A549 (cell line): ENCODE measurements at regions of chr17 and their contacts with region 1.

Region 1: DNA sequence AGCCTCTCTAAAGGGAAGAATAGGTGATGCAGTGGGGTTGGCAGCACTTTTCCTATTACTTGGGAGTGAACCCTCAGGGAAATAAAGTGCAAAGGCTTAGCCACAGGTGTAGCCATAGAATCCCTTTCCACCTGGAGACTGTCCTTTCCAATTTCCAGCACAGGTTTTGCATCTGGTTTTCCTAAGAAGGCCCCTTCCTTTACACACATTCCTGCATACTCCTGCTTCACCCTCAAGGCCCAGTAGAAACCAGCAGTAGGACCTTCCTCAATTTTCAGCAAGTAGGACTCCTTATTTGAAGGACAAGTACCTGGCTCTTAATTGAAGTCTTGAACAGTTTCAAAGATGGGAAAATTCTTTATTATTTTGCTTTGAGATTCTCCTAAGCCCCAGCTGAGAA is 171.8 kb upstream of the TBX2 start:
- DNase-seq: no peak
- ATAC-seq: no peak
- H3K4me3 ChIP-seq: no peak overlapping the region
- H3K27ac ChIP-seq: no peak overlapping the region
- H3K4me1 ChIP-seq: no peaks in the 10 kb centered on the region
- CTCF ChIP-seq: no peak
- EP300 ChIP-seq: no peak
- POLR2A ChIP-seq: no peak
- RAD21 ChIP-seq: no peak

Region 2: DNA sequence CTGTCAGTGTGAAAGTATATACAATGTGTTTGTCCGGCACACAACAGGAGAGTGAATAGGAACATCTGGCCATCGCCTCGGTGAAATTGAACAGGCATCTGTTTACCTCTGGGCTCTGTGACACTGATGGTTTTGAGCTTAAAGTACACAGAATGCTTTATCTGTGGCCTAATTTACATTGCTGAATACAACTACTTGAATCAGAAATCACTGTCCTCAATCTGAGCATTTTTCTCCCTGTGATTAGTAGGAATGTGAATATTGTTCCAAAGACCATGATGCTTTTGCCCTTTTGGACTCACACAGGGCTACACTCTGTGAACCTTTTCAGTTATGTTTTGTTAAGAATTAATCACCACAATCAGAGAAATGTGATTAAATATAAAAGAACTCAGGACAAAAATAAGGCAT is 151.2 kb before region 1 on chr17:
- CTCF ChIA-PET with region 1: no interaction called
- POLR2A ChIA-PET with region 1: no interaction called
- DNase-seq: no peak
- ATAC-seq: no peak
- H3K4me3 ChIP-seq: no peak overlapping the region
- H3K27ac ChIP-seq: no peak overlapping the region
- H3K4me1 ChIP-seq: peaks cover 5% of the 10 kb centered on the region; the same call in 1 of the 3 replicates
- CTCF ChIP-seq: no peak
- EP300 ChIP-seq: no peak
- POLR2A ChIP-seq: no peak
- RAD21 ChIP-seq: no peak

Region 3: GRCh38 chr17:61240851-61241468 is 13.1 kb after region 1 on chr17:
- CTCF ChIA-PET with region 1: interaction called, 11 read pairs
- POLR2A ChIA-PET with region 1: no interaction called
- DNase-seq: no peak
- ATAC-seq: no peak
- H3K4me3 ChIP-seq: no peak overlapping the region
- H3K27ac ChIP-seq: no peak overlapping the region
- H3K4me1 ChIP-seq: peaks cover 10% of the 10 kb centered on the region
- CTCF ChIP-seq: no peak
- EP300 ChIP-seq: no peak
- POLR2A ChIP-seq: no peak
- RAD21 ChIP-seq: no peak